CD4-positive, alpha-beta T cell (primary cell): ENCODE measurements at regions of chr13 and their contacts with region 1.

Region 1: GRCh38 chr13:28658796-28659620 is at the start of gene POMP:
- DNase-seq: peak; percentile 86 to 95 (median 89)
- ATAC-seq: peak; percentile 84
- H3K4me3 ChIP-seq: peak within 1 kb of the TSS; percentile 84
- H3K4me3 Mint-ChIP-seq: peak within 1 kb of the TSS; percentile 98
- H3K27ac ChIP-seq: peak within 1 kb of the TSS; percentile 92 to 95
- H3K27ac Mint-ChIP-seq: peak within 1 kb of the TSS; percentile 99
- H3K4me1 ChIP-seq: peaks cover 27% of the 10 kb centered on the region
- H3K4me1 Mint-ChIP-seq: peaks cover 72% of the 10 kb centered on the region
- H3K27me3 ChIP-seq: no peaks in the 10 kb centered on the region
- H3K27me3 Mint-ChIP-seq: no peaks in the 10 kb centered on the region
- CTCF ChIP-seq: no peak
- total RNA-seq, gene POMP: 25.8 to 28.5 TPM

Region 2: DNA sequence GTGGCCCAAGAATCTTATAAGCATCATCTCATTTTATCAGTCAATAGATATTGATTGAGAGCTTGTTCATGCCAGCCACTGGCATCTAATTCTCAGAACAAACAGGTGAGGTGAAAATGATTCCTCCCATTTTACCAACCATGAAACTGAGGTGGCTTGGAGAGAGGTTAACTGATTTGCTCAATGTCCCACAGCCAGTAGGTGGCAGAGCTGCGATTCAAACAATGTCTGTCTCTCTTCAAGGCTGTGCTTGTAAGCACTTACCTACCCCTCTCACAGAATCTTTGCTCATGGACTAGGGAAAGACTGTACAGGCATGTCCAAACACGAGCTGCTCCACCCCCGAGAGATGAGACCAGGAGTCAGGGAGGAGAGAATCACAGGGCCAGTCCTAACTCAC is 888.2 kb before region 1 on chr13:
- CTCF ChIA-PET with region 1: no interaction called
- POLR2A ChIA-PET with region 1: no interaction called
- intact Hi-C with region 1: no loop called
- DNase-seq: peak in 5 of 14 experiments; percentile 12 to 45 (median 24)
- ATAC-seq: no peak
- H3K4me3 ChIP-seq: no peak overlapping the region
- H3K4me3 Mint-ChIP-seq: no peak overlapping the region
- H3K27ac ChIP-seq: no peak overlapping the region
- H3K27ac Mint-ChIP-seq: no peak overlapping the region
- H3K4me1 ChIP-seq: no peaks in the 10 kb centered on the region
- H3K4me1 Mint-ChIP-seq: no peaks in the 10 kb centered on the region
- H3K27me3 ChIP-seq: peaks cover 6 to 23% of the 10 kb centered on the region in 2 experiments
- H3K27me3 Mint-ChIP-seq: peaks cover 45% of the 10 kb centered on the region
- CTCF ChIP-seq: peak; percentile 56

Region 3: GRCh38 chr13:28494776-28495537 is 164.1 kb before region 1 on chr13 and contains the start of gene FLT1:
- CTCF ChIA-PET with region 1: no interaction called
- POLR2A ChIA-PET with region 1: no interaction called
- intact Hi-C with region 1: loop called in 1 of 2 experiments (anchors 5 kb)
- DNase-seq: peak in 9 of 14 experiments; percentile 9 to 59 (median 45)
- ATAC-seq: peak; percentile 37
- H3K4me3 ChIP-seq: peak within 1 kb of the TSS; percentile 50
- H3K4me3 Mint-ChIP-seq: peak within 1 kb of the TSS; percentile 64
- H3K27ac ChIP-seq: no peak within 1 kb of the TSS
- H3K27ac Mint-ChIP-seq: no peak within 1 kb of the TSS
- H3K4me1 ChIP-seq: peaks cover 20% of the 10 kb centered on the region
- H3K4me1 Mint-ChIP-seq: peaks cover 42% of the 10 kb centered on the region
- H3K27me3 ChIP-seq: peaks cover 31 to 54% of the 10 kb centered on the region in 2 experiments
- H3K27me3 Mint-ChIP-seq: peaks cover 59% of the 10 kb centered on the region
- CTCF ChIP-seq: no peak
- total RNA-seq, gene FLT1: 1.1 to 1.2 TPM

Region 4: DNA sequence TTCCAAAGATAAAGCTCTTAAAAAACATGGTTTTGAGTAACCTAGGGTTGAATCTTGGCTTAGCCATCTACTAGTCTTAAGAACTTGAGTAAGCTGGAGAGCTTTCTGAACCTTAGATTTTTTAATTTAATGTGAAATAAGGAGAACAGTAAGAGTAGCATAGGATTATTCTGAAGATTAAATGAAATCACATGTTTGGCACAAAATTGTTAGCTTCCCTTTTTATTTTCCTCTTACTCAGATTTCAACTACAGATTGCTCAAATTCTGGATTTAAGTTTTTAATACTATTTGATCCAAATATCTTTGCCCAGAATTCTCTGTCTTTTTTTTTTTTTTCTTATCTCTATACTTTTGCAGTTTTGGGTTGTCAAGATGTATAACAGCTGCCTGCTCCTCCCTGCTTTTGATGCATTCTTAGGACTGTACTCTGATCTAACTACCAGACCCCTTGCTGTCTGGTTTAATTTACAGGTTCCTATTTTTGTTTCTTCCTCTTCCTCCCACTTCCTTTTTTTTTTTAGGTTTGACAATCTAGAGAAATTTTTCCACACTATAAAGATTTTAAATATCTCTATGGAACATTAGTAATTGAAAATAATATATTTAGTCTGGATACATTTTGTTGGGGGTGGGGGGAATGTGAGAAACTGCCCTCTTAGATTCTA is 12.3 kb after region 1 on chr13:
- CTCF ChIA-PET with region 1: interaction called, 3 read pairs
- POLR2A ChIA-PET with region 1: interaction called, 15 read pairs
- intact Hi-C with region 1: no loop called
- DNase-seq: no peak
- ATAC-seq: no peak
- H3K4me3 ChIP-seq: no peak overlapping the region
- H3K4me3 Mint-ChIP-seq: no peak overlapping the region
- H3K27ac ChIP-seq: no peak overlapping the region
- H3K27ac Mint-ChIP-seq: no peak overlapping the region
- H3K4me1 ChIP-seq: no peaks in the 10 kb centered on the region
- H3K4me1 Mint-ChIP-seq: peaks cover 28% of the 10 kb centered on the region
- H3K27me3 ChIP-seq: no peaks in the 10 kb centered on the region
- H3K27me3 Mint-ChIP-seq: no peaks in the 10 kb centered on the region
- CTCF ChIP-seq: no peak

Region 5: DNA sequence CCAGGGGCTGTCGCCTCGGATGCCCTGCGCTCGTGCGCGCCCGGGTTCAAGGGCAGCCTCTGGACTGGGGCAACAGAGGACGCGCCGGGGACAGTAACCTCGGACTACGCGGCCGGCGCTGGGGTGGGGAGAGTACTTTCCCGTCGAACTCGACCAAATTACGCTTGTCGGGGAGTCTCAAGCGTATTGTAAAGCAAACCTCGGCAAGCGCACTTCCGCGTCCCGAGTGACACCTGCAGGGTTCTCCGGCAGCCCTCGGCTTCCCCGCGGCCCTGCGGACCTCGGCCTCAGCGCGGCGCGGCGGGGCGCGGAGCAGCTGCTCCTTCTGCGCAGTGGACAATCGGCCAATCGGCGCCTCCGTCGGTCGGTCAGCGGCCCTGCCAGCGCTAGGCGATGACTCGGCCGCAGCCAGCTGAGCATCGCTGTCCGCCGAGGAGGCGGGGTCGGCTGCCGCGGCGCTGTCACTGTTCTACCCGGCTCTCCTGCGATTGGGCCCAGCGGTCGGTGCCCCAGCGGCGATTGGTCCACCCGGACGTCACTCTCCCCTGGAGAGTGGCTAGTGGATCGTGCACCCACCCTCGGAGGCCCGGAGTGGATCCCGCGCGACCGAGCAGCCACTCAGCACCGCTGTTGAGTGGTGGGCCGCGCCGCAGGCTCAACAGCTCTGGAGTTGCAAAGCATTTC is 59.7 kb after region 1 on chr13 and contains the start of gene SLC46A3:
- CTCF ChIA-PET with region 1: interaction called, 3 read pairs
- POLR2A ChIA-PET with region 1: interaction called, 57 read pairs
- intact Hi-C with region 1: loop called (anchors 1 to 2 kb)
- DNase-seq: peak; percentile 94 to 98 (median 97)
- ATAC-seq: peak; percentile 98
- H3K4me3 ChIP-seq: peak within 1 kb of the TSS; percentile 95
- H3K4me3 Mint-ChIP-seq: peak within 1 kb of the TSS; percentile 94
- H3K27ac ChIP-seq: peak within 1 kb of the TSS; percentile 74 to 76
- H3K27ac Mint-ChIP-seq: peak within 1 kb of the TSS; percentile 88
- H3K4me1 ChIP-seq: peaks cover 24% of the 10 kb centered on the region
- H3K4me1 Mint-ChIP-seq: peaks cover 34% of the 10 kb centered on the region
- H3K27me3 ChIP-seq: no peaks in the 10 kb centered on the region
- H3K27me3 Mint-ChIP-seq: no peaks in the 10 kb centered on the region
- CTCF ChIP-seq: no peak
- total RNA-seq, gene SLC46A3: 6.3 to 7.4 TPM